HEK293 (cell line): ENCODE measurements at regions of chr6 and their contacts with region 1.

Region 1: GRCh38 chr6:85354761-85355618 is 94.9 kb upstream of the NT5E start:
- H3K4me3 ChIP-seq: no peak overlapping the region
- H3K27ac ChIP-seq: no peak overlapping the region
- H3K4me1 ChIP-seq: no peaks in the 10 kb centered on the region
- CTCF ChIP-seq: peak; percentile 74

Region 2: GRCh38 chr6:85300581-85300980 is 54.4 kb before region 1 on chr6:
- CTCF ChIA-PET with region 1: no interaction called
- POLR2A ChIA-PET with region 1: no interaction called
- H3K4me3 ChIP-seq: no peak overlapping the region
- H3K27ac ChIP-seq: no peak overlapping the region
- H3K4me1 ChIP-seq: no peaks in the 10 kb centered on the region
- CTCF ChIP-seq: no peak

Region 3: DNA sequence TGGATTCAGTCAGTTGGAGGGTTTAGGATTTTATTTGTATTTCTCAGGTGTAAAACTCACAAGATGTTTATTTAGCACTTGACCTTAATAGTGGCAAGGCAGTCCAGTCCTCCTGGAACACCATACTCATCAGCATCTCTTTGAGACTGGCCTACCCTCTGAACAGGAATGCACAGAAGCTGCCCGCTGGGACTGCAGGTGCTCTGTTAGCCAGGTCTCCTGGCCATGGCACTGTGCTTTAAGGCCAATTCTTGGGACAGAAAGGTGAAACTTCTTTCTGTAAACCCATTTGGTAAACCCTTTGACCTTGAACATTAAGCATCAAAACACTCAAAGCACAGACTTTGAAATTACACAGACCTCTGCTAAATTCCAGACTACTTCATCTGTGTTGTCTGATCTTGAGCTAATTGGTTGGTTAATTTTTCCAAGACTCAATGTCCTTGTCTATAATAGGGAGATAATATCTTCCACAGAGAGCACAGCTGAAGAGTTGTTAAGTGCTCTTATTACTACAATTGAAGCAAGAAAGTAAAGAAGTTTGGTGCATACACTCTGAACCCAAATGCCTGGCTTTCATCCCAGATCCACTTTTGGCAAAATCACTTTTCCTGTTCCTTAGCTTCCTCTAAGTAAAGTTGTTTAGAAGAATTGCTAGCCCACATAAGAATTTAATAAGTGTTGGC is 40.0 kb after region 1 on chr6:
- CTCF ChIA-PET with region 1: no interaction called
- POLR2A ChIA-PET with region 1: no interaction called
- H3K4me3 ChIP-seq: no peak overlapping the region
- H3K27ac ChIP-seq: no peak overlapping the region
- H3K4me1 ChIP-seq: no peaks in the 10 kb centered on the region
- CTCF ChIP-seq: no peak

Region 4: GRCh38 chr6:85498596-85499258 is 143.7 kb after region 1 on chr6:
- CTCF ChIA-PET with region 1: interaction called, 10 read pairs
- POLR2A ChIA-PET with region 1: no interaction called
- H3K4me3 ChIP-seq: no peak overlapping the region
- H3K27ac ChIP-seq: peak overlapping the region; percentile 1; the same call in 1 of the 2 replicates
- H3K4me1 ChIP-seq: peaks cover 15% of the 10 kb centered on the region
- CTCF ChIP-seq: no peak

Region 5: DNA sequence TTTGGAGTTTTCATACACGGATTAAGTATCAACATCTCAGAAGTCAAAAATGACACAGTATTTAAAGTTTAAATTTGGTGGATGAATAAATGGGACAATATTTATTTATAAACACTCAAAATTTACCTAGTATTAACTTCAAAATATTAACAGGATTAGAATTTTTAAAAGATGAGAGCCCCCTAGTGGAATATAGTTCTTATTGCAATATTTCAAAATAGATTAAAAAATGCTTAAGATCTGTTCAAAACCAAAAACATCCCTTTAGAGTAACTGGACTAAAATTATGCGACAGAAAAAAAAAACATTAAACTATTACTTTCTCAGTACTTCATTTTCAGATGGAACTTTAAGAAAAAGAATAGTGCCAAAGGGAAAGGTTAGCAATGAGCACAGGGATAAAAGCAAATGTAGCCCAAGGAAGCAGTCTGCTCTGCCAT is 182.1 kb after region 1 on chr6:
- CTCF ChIA-PET with region 1: interaction called, 55 read pairs
- POLR2A ChIA-PET with region 1: no interaction called
- H3K4me3 ChIP-seq: no peak overlapping the region
- H3K27ac ChIP-seq: no peak overlapping the region
- H3K4me1 ChIP-seq: no peaks in the 10 kb centered on the region
- CTCF ChIP-seq: no peak